Endothelial cell of umbilical vein (primary cell): ENCODE measurements at regions of chr3 and their contacts with region 1.

Region 1: DNA sequence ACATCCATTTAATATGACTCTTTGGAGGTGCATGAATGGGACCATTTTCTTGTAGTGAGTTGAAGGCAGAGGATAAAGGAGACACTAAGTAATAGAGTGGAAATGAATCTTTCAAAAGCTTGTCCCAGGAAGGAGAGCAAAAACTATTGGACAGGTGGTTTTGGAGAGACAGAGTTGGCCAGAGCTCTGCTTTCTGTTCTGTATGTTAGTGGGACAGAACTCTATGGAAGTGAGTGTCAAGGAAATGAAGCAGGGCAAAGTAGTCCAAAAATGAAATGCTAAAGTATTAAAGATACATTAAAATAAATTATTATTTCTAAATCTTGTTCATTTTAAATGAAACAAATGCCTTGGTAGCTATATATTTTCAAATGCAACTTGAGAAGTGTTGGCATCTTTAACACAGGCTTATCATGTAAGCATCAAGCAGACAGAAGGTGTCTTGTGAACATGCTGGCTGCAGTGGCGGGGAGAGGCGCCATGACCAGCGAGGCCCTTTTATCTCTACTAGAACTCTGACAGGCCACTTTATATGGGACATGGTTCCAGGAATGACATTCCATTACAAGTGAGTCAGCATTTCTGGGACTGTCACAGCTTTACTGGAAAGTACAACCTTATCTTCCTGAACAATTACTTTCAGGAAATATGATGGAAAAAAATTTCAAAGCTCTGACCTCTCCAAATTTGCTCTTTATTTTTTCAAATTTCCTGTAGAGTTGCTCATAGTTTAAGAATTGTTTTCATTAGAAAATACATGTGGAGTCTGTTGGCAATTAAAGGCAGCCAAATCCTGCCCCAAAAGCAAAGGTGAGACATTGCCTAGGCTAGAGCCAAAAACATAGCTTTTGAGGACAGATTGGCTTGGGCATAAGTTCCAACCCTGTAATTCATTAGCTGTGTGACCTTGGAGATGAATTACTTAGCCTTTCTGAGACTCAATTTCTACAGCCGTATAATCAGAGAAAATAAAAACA is 106.5 kb downstream of the ECT2 start:
- DNase-seq: peak; percentile 88
- H3K4me3 ChIP-seq: no peak overlapping the region
- H3K27ac ChIP-seq: peak overlapping the region; percentile 46
- H3K4me1 ChIP-seq: peaks cover 45% of the 10 kb centered on the region
- H3K27me3 ChIP-seq: no peaks in the 10 kb centered on the region
- CTCF ChIP-seq: no peak
- POLR2A ChIP-seq: no peak

Region 2: GRCh38 chr3:172710664-172711453 is 146.2 kb before region 1 on chr3 and contains the start of gene NCEH1:
- CTCF ChIA-PET with region 1: no interaction called
- POLR2A ChIA-PET with region 1: no interaction called
- dilution Hi-C with region 1: no loop called
- intact Hi-C with region 1: no loop called
- DNase-seq: peak; percentile 98
- H3K4me3 ChIP-seq: peak within 1 kb of the TSS; percentile 36 to 79 (median 75)
- H3K27ac ChIP-seq: peak within 1 kb of the TSS; percentile 88
- H3K4me1 ChIP-seq: peaks cover 26% of the 10 kb centered on the region
- H3K27me3 ChIP-seq: no peaks in the 10 kb centered on the region
- CTCF ChIP-seq: peak; percentile 75 to 88
- POLR2A ChIP-seq: peak; percentile 99
- total RNA-seq, gene NCEH1: 20.3 and 20.5 TPM in 2 replicates

Region 3: DNA sequence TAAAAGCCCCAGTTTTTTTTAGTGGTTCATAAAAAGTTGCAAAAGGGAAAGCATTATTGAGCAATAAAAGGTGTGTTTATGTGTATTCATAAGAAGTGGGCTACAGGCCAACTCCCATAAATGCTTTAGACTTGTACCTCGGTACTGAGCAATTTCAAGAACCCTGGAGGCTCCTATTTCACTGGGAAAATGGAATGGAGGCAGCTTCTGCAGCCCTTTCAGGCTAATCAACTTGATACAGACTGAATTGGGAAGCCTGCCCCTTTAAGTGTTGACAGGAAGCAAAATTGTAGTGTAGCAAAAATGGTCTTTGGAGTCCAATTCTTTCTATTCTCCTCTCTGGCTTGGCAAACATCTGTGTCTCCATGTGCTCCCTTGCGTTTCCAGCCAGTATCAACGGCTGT is 12.3 kb after region 1 on chr3:
- CTCF ChIA-PET with region 1: interaction called, 4 read pairs
- POLR2A ChIA-PET with region 1: no interaction called
- dilution Hi-C with region 1: no loop called
- intact Hi-C with region 1: loop called (anchors 1 kb)
- DNase-seq: no peak
- H3K4me3 ChIP-seq: no peak overlapping the region
- H3K27ac ChIP-seq: peak overlapping the region; percentile 19
- H3K4me1 ChIP-seq: peaks cover 26% of the 10 kb centered on the region
- H3K27me3 ChIP-seq: no peaks in the 10 kb centered on the region
- CTCF ChIP-seq: no peak
- POLR2A ChIP-seq: no peak

Region 4: GRCh38 chr3:172877011-172877410 is 20.0 kb after region 1 on chr3:
- CTCF ChIA-PET with region 1: interaction called, 12 read pairs
- POLR2A ChIA-PET with region 1: no interaction called
- dilution Hi-C with region 1: no loop called
- intact Hi-C with region 1: no loop called
- DNase-seq: peak; percentile 66
- H3K4me3 ChIP-seq: no peak overlapping the region
- H3K27ac ChIP-seq: no peak overlapping the region
- H3K4me1 ChIP-seq: peaks cover 23% of the 10 kb centered on the region
- H3K27me3 ChIP-seq: no peaks in the 10 kb centered on the region
- CTCF ChIP-seq: no peak
- POLR2A ChIP-seq: no peak

Region 5: DNA sequence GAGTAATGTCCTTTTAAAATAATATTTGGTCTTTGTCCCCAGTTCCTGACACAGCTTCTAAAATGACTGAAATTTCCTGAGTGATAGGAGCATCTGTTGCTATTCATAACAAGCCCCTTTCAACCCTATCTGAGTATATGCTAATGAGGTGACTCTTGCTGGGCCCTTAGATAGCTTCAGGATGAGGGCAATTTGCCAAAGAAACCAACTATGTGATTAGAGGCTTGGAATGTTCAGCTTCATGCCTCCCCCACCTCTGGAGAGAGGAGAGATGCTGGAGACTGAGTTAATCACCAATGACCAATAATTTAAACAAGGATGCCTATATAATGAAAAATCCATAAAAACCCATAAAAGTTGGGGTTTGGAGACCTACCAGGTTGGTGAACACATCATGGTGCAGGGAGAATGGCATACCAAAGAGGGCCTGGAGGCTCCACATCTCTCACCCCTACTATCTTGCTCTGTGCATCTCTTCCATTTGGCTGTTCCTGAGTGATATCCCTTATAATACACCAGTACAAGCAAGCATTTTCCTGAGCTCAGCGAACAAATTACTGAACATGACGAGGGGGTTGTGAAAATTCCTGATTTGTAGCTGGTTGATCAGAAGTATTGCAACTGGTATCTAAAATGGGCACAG is 82.7 kb after region 1 on chr3:
- CTCF ChIA-PET with region 1: interaction called, 3 read pairs
- POLR2A ChIA-PET with region 1: no interaction called
- dilution Hi-C with region 1: no loop called
- intact Hi-C with region 1: loop called (anchors 2 kb)
- DNase-seq: peak; percentile 77
- H3K4me3 ChIP-seq: no peak overlapping the region
- H3K27ac ChIP-seq: peak overlapping the region; percentile 84
- H3K4me1 ChIP-seq: peaks cover 21% of the 10 kb centered on the region
- H3K27me3 ChIP-seq: no peaks in the 10 kb centered on the region
- CTCF ChIP-seq: no peak
- POLR2A ChIP-seq: no peak